ENCODE measurements at regions of chr19 and their contacts with region 1.

Region 1: DNA sequence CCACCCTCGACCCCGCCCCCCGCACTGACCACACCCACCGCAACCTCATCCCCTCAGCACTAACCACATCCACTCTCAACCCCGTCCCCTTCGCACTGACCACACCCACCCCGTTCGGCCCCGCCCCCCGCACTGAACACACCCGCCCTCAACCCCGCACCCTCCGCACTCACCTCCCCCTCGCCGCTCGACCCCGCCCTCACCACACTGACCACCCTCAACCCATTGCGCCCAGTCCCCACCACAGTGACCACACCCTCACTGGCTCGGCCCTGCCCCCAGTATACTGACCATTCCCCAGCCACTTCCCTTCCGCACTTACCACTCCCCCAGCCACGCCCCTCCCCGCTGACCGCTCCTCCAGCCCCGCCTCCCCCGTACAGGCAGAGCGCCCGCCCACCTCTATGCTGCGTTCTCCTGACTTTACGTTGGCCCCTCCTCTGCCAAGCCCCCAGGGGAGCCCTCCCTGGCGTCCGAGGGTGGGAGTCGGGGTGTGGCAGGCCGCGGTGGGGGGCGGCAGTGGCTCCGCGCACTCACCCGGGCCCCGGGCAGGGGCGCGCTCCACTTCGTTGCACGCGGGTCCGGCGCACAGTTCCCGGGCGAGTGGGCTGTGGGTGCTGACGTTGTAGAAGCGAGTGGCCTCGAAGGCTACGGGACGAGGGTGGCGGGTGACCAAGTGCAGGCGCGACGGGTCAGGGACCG is 8.5 kb downstream of the F2RL3 start:
- DNase-seq: peak; percentile 96 to 97
- ATAC-seq: peak; percentile 90 to 94 (median 92)
- H3K4me3 ChIP-seq: peak overlapping the region; percentile 19 to 76 (median 66)
- H3K27ac ChIP-seq: peak overlapping the region; percentile 46 to 87 (median 74)
- H3K4me1 ChIP-seq: peaks cover 0 to 34% (median 15%) of the 10 kb centered on the region in 9 donors
- H3K27me3 ChIP-seq: peaks cover 0 to 19% (median 0%) of the 10 kb centered on the region in 7 donors
- CTCF ChIP-seq: no peak

Region 2: DNA sequence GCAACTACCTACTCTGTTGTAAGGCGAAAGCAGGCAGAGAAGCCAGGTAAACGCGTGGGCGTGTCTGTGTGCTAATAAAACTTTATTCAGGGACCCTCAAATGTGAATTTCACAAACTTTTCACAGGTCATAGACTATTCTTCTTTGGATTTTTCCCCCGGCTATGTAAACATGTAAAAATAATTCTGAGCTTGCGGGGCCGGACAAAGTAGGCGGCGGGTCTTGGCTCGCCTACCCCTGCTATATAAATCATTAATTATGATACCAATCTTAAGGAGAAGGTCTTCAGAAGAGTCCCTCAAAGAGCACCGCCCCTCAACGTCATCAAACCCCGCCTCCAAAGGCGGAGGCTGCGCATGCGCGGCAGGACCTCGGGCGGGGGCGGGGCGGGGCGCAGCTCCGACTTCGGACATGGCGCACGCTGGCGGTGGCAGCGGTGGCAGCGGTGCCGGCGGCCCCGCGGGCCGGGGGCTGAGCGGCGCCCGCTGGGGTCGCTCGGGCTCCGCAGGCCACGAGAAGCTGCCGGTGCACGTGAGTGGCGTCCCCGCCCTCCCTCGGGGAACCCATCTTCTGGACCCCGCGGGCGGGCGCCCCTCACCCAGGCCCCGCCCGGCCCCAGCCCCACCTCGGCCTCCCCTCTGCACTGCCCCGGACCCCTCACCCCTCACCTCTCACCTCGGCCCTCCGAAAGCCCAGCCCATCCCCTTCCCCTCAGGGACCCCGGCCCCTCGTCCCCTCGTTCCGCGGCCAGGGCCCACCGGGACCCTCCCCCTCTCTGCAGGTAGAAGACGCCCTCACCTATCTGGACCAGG is 68.1 kb before region 1 on chr19 and contains the start of gene SIN3B:
- intact Hi-C with region 1: loop called in 2 of 10 experiments (anchors 5 to 10 kb)
- DNase-seq: peak; percentile 82 to 88
- ATAC-seq: peak; percentile 83 to 95 (median 90)
- H3K4me3 ChIP-seq: peak within 1 kb of the TSS; percentile 59 to 87 (median 80)
- H3K27ac ChIP-seq: peak within 1 kb of the TSS; percentile 72 to 89 (median 80)
- H3K4me1 ChIP-seq: peaks cover 12 to 52% (median 30%) of the 10 kb centered on the region in 9 donors
- H3K27me3 ChIP-seq: peaks cover 0 to 5% (median 0%) of the 10 kb centered on the region in 7 donors
- CTCF ChIP-seq: peak in 1 of 9 donors; percentile 8
- total RNA-seq, gene SIN3B: 22.9 to 30.6 (median 24.8) TPM

Region 3: DNA sequence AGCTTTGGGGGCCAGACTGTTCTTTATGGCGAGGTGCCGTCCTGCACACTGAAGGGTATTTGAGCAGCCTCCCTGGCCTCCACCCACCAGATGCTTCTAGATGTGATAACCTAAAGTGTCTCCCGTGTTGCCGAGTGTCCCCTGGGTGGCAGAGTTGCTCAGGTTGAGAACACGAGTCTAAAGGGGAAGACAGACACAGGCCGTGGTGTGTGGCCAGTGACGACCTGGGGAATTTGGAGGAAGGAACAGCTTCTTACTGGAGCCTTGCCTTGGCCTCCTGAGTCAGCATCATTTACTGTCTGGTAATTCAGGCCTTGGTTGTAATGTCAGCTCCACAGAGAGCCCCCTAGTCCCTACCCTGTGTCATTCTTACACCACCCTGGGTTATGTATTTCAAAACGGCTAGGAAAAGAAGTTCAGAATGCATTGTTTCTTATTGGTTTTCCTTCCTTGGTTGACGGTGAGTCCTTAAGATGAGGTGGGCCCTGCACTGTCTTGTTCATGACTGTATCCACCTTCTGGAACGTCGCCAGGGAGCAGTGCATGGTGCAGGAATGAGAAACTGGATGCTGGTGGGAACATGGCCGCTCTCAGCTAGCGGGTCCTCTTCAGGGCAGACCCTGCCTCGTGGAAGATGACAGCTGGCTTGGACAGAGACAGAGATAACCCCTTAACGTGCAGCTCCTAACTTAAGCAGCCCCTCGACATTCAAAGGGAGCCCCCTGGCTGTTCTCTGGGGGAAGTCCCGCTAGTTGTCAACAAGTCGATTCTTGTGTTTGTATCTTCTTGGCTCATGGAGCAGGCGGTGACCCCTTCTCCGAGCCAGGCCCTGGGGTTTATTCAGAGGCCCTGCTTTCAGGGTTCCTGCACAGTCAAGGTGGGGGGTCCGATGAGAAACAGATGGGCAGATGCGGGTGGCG is 60.9 kb before region 1 on chr19:
- intact Hi-C with region 1: loop called in 1 of 10 experiments (anchors 10 kb)
- DNase-seq: no peak
- ATAC-seq: peak; percentile 31 to 72 (median 48)
- H3K4me3 ChIP-seq: no peak overlapping the region
- H3K27ac ChIP-seq: no peak overlapping the region
- H3K4me1 ChIP-seq: peaks cover 0 to 26% (median 1%) of the 10 kb centered on the region in 9 donors
- H3K27me3 ChIP-seq: no peaks in the 10 kb centered on the region
- CTCF ChIP-seq: peak in 2 of 9 donors; percentile 22 to 28

Region 4: DNA sequence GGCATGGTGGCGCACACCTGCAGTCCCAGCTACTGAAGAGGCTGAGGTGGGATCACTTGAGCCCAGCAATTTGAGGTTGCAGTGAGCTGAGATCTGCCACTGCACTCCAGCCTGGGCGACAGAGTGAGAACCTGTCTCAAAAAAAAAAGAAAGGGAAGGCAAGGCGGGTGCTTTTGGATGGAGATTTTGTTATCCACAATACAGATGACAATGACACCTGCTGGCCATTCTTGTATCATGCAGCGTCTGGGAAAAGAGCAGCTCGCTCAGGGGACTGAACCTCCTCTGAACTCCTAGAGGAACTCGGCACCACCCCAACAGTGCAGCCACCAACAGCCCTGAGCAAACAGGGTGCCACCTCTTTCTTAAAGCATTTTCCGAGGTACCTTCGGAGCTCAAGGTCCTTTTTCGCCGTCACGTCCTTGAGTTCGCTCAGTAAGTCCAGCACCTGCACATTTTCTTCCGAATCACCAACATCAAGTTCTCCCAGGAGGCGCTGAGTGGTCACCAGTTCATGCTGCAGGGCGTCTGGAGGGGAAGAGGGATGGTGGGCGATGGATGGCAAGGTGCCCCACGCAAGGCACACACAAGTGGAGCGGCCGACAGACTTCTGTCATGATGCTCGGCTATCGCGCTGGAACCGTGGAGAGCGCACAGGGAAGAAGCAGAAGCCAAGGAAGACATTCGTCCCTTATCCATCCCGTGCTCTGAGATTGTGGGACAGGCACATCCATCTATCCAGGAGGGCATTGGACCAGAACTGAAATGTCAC is 155.3 kb after region 1 on chr19:
- intact Hi-C with region 1: loop called in 1 of 10 experiments (anchors 10 kb)
- DNase-seq: peak in 1 of 2 donors; percentile 31
- ATAC-seq: peak in 7 of 8 donors; percentile 42 to 73 (median 62)
- H3K4me3 ChIP-seq: no peak overlapping the region
- H3K27ac ChIP-seq: no peak overlapping the region
- H3K4me1 ChIP-seq: no peaks in the 10 kb centered on the region
- H3K27me3 ChIP-seq: no peaks in the 10 kb centered on the region
- CTCF ChIP-seq: peak; percentile 39 to 79 (median 68)

Region 5: DNA sequence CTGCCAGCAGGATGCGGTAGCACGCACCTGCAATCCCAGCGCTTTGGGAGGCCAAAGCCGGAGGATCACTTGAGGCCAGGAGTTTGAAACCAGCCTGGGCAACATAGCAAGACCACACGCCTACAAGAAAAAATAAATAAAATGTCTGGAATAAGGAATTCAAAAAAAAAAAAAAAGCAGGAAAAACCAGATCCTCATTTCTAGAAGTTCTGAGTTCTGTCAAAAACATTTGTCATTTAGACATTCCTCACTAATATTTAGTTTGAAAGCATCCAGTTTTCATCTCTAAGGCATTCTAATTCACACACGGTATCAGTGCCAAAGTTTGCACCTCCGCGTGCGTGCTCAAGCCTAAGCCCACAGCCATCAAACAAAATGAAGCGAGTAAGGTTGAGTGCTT is 281.0 kb after region 1 on chr19:
- intact Hi-C with region 1: loop called in 1 of 10 experiments (anchors 5 kb)
- DNase-seq: no peak
- ATAC-seq: no peak
- H3K4me3 ChIP-seq: no peak overlapping the region
- H3K27ac ChIP-seq: no peak overlapping the region
- H3K4me1 ChIP-seq: peaks cover 0 to 9% (median 0%) of the 10 kb centered on the region in 9 donors
- H3K27me3 ChIP-seq: no peaks in the 10 kb centered on the region
- CTCF ChIP-seq: no peak

Measured in heart right ventricle (tissue), 16 donors.